ENCODE measurements at regions of chr5 and their contacts with region 1.

Region 1: DNA sequence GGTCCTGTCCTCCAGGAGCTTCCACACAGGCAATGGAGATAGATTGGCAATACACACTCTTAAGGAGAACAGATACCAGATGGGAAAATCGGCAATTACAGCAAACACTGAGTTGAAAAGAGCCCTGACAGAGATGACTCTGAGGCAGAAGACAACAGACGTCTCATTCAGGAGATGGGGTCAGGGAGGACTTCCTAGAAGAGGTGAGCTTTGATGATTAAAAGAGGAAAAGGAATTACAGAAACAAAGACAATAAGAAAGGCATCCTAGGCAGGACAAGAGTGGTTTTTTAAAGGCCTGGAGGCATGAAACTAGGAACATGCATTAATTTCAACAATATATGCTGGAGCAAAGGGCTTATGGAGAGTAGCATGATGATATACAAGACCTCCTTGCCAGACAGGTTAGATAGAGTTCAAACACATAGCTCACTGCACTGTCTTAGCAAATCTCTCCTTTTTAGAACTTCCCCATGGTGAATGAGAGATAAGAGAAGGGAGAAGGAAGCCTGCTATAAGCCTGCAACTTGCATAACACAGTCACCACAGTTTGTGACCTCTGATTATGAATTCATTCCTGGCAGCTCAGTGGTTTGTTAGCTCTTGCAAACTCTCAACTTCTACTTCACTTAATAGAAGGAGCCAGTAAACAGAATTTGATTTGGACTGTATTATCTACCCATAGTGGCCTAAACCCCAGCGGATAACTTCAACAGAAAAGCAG is 48.5 kb downstream of the SIL1 start:
- DNase-seq: no peak

Region 2: GRCh38 chr5:139193928-139194327 is 44.3 kb after region 1 on chr5:
- intact Hi-C with region 1: loop called in 1 of 2 experiments (anchors 5 kb)
- DNase-seq: no peak